Esophagus muscularis mucosa (tissue), 4 donors: ENCODE measurements at regions of chr10 and their contacts with region 1.

Region 1: GRCh38 chr10:133309720-133310398 is 1.1 kb downstream of the ZNF511 start:
- DNase-seq: no peak
- H3K4me3 ChIP-seq: peak overlapping the region in 2 of 4 donors; percentile 99 to 100
- H3K27ac ChIP-seq: peak overlapping the region; percentile 94 to 98 (median 96)
- H3K4me1 ChIP-seq: peaks cover 15 to 48% (median 45%) of the 10 kb centered on the region in 4 donors
- H3K27me3 ChIP-seq: no peaks in the 10 kb centered on the region
- CTCF ChIP-seq: no peak
- EP300 ChIP-seq: no peak
- POLR2A ChIP-seq: no peak

Region 2: DNA sequence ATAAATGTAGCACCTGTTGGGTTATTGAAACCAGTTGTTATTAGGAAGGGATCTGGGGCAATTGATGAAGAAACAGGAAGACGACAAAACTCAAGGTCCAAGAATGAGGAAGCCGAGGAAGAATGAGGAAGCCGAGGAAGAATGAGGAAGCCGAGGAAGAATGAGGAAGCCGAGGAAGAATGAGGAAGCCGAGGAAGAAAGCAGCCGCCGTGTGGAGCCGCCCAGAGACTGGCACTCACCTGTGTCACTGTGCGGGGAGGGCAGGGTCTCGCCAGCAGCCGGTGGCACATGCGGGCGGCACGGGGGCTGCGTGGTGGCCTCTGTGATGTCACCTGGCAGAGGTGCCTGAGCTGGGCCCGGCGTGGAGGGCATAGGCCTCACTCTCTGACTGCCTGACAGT is 296.4 kb before region 1 on chr10:
- intact Hi-C with region 1: no loop called
- DNase-seq: no peak
- H3K4me3 ChIP-seq: no peak overlapping the region
- H3K27ac ChIP-seq: peak overlapping the region in 2 of 4 donors; percentile 34 to 46
- H3K4me1 ChIP-seq: peaks cover 0 to 8% (median 3%) of the 10 kb centered on the region in 4 donors
- H3K27me3 ChIP-seq: peaks cover 0 to 27% (median 0%) of the 10 kb centered on the region in 4 donors
- CTCF ChIP-seq: no peak
- EP300 ChIP-seq: no peak
- POLR2A ChIP-seq: no peak

Region 3: GRCh38 chr10:133230387-133231195 is 79.3 kb before region 1 on chr10:
- intact Hi-C with region 1: no loop called
- DNase-seq: no peak
- H3K4me3 ChIP-seq: peak overlapping the region in 3 of 4 donors; percentile 16 to 29 (median 29)
- H3K27ac ChIP-seq: no peak overlapping the region
- H3K4me1 ChIP-seq: peaks cover 0 to 28% (median 22%) of the 10 kb centered on the region in 4 donors
- H3K27me3 ChIP-seq: peaks cover 0 to 98% (median 20%) of the 10 kb centered on the region in 4 donors
- CTCF ChIP-seq: no peak
- EP300 ChIP-seq: no peak
- POLR2A ChIP-seq: no peak

Region 4: DNA sequence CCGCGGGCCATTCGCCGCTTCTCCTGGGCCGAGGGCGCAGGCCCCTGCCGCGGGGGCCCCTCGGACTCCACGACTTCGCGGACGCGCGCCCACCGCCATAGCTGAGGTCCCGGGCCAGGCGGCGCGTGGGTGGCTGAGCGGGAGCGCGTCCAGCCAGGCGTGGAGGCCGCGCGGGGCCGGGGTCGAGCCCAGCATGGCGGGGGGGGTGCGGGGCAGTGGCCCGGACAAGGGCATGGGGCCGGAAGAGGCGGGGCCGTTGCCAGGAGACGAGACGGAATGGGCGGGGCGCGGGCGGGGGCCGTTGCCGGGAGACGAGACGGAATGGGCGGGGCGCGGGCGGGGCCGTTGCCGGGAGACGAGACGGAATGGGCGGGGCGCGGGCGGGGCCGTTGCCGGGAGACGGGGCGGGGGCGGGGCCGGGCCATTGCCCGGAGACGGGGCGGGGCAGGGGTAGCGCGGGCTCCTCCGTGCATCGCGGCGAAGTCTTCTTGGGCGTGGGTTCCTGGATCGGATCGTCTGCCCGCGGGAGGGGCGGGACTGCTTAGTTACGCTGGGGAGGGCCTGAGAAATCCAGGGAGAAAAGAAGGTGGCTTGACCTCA is 48.0 kb before region 1 on chr10:
- intact Hi-C with region 1: loop called (anchors 2 kb)
- DNase-seq: no peak
- H3K4me3 ChIP-seq: peak overlapping the region; percentile 78 to 95 (median 84)
- H3K27ac ChIP-seq: peak overlapping the region; percentile 84 to 92 (median 90)
- H3K4me1 ChIP-seq: peaks cover 45 to 54% (median 51%) of the 10 kb centered on the region in 4 donors
- H3K27me3 ChIP-seq: no peaks in the 10 kb centered on the region
- CTCF ChIP-seq: no peak
- EP300 ChIP-seq: no peak
- POLR2A ChIP-seq: peak; percentile 51

Region 5: GRCh38 chr10:133378251-133379096 is 68.6 kb after region 1 on chr10:
- intact Hi-C with region 1: loop called (anchors 5 kb)
- DNase-seq: no peak
- H3K4me3 ChIP-seq: peak overlapping the region; percentile 74 to 93 (median 87)
- H3K27ac ChIP-seq: peak overlapping the region; percentile 80 to 89 (median 84)
- H3K4me1 ChIP-seq: peaks cover 16 to 44% (median 36%) of the 10 kb centered on the region in 4 donors
- H3K27me3 ChIP-seq: no peaks in the 10 kb centered on the region
- CTCF ChIP-seq: peak in 1 of 3 experiments; percentile 4
- EP300 ChIP-seq: no peak
- POLR2A ChIP-seq: no peak